ENCODE measurements at regions of chr13 and their contacts with region 1.

Region 1: DNA sequence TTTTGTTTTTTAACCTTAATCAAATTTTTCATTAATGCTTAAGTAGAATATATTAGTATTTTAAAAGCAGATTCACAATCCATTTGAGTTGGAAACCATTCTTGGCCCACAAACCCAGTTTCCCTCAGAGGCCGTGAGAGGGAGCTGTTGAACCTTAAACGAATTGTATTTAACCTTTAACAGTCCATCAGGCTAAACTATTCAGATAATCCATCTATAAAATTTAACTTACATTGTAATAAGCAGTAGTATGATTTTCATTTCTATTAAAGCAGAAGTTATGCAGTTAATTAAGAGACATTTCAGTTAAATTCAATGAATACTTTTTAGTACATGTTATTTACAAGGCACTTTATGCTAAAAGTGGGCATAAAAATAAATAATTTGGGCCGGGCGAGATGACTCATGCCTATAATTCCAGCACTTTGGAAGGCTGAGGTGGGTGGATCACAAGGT is 123.1 kb upstream of the C1QTNF9B start:
- DNase-seq: no peak
- H3K4me3 ChIP-seq: no peak overlapping the region
- H3K27me3 ChIP-seq: no peaks in the 10 kb centered on the region
- CTCF ChIP-seq: peak; percentile 81

Region 2: DNA sequence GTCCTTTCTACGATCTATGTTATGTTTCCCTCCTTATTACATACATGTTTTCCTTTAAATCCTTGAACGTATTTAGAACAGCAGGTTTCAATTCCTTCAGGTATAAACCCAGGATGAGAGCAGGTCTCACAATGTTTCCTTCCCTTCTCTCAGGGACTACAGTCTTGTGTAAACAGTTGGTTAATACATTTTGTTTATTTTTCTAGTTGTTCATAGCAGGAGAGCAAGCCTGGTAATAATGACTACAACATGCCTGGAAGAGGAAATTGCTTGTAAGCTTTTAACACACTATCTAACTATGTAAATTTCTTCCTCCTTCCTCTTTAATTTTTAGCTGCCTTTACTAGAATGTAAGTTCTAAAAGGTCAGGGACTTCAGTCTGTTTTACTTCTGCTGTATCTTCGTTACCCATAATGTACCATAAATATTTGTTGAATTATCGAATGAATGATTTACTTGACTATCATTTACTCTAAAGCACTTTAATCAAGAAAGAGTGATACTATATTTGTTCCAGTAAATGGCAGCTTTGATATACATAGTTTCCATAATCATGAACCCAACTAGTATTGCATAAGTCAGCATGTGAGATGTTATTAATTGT is 479.1 kb before region 1 on chr13:
- CTCF ChIA-PET with region 1: no interaction called
- POLR2A ChIA-PET with region 1: no interaction called
- DNase-seq: no peak
- H3K4me3 ChIP-seq: no peak overlapping the region
- H3K27me3 ChIP-seq: no peaks in the 10 kb centered on the region
- CTCF ChIP-seq: no peak

Region 3: GRCh38 chr13:23921451-23921888 is 98.9 kb before region 1 on chr13:
- CTCF ChIA-PET with region 1: interaction called, 15 read pairs
- POLR2A ChIA-PET with region 1: no interaction called
- DNase-seq: no peak
- H3K4me3 ChIP-seq: no peak overlapping the region
- H3K27me3 ChIP-seq: no peaks in the 10 kb centered on the region
- CTCF ChIP-seq: peak; percentile 64

Region 4: DNA sequence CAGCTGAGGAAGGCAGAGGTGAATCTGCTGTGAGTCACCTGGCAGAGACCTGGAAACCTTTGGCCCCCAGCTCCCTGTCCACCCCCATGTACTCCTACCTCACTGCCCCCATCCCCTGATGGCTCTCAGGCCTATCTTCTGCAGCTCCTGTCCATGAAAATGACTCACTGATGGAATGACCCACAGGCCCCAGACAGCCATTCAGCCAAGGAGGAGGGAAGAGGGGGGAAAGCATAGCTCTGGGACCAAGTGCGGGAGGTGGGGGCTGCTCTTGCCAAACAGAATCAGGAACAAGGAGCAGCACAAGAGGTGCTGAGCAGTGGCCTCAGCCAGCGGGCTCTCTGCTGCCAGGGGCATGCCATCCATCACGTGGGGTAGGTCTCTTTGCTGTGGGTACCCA is 11.7 kb before region 1 on chr13:
- CTCF ChIA-PET with region 1: interaction called, 21 read pairs
- POLR2A ChIA-PET with region 1: no interaction called
- DNase-seq: no peak
- H3K4me3 ChIP-seq: no peak overlapping the region
- H3K27me3 ChIP-seq: no peaks in the 10 kb centered on the region; the same call in 1 of the 2 replicates
- CTCF ChIP-seq: no peak

Region 5: DNA sequence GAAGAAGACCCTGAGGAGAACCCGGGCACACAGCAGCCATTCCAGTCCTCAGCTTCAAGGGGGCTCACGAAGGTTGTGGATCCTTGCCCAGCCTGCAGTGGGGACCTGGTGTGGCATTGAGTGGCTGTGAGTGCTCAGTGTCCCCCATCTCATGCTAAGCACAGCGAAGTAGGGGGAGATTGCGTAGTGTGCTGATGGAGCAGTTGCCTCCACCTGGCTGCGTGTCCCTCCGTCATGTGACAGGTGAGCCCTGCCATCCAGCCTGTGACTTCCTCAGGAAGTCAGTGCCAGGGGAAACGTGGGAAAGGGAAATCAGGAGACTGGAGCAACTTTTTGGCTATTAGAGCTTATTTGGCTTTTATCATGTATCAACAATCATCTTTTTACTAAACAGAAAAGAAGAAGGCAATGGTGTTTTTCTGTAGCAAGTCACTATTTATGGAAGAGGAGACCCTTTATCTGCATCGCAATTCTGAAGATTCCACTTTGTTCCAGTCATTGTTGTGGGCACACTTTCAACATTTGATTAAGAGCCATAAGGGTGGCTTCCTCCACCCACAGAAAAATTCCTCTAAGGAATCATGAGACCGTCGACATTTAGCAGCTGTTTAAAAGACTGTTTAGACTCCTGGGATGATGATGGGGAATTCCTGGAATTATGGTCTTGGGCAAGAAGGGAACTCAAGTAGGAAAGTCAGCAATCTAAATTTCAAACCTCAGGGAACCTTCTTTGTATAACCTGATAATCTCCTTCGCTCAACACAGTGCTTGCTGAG is 13.3 kb after region 1 on chr13:
- CTCF ChIA-PET with region 1: interaction called, 40 read pairs
- POLR2A ChIA-PET with region 1: no interaction called
- DNase-seq: peak; percentile 59
- H3K4me3 ChIP-seq: no peak overlapping the region
- H3K27me3 ChIP-seq: no peaks in the 10 kb centered on the region
- CTCF ChIP-seq: no peak

Region 6: GRCh38 chr13:24053519-24054251 is 33.3 kb after region 1 on chr13:
- CTCF ChIA-PET with region 1: interaction called, 15 read pairs
- POLR2A ChIA-PET with region 1: no interaction called
- DNase-seq: no peak
- H3K4me3 ChIP-seq: no peak overlapping the region
- H3K27me3 ChIP-seq: no peaks in the 10 kb centered on the region
- CTCF ChIP-seq: peak; percentile 79

Region 7: DNA sequence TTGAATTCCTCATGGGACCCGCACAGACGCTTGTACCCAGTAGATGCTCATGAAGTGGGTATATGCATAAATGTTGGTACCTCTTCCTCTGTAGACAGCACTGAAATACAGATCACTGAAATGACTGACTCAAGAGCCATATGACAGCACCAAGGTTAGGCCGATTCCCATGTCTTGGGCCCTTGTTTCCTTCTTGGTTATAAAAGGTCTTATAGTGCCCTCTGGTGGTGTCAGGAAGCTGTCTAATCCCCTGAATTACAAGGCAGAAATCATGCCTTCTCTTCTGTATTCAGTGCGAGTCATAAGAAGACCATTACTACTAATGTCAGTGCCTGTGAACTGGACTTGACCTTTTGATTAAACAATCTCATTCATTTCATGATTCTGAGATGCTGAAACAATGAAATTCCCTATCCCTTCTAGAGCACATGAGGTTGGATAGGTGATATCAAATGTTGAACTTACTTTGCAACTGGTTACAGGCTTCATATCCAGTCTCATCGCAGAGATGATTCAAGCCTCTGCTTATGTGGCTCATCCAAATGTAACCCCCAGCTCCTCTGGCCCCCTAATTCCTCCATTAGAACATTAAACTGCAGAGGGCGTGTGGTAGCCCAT is 199.8 kb after region 1 on chr13:
- CTCF ChIA-PET with region 1: interaction called, 75 read pairs
- POLR2A ChIA-PET with region 1: no interaction called
- DNase-seq: no peak
- H3K4me3 ChIP-seq: no peak overlapping the region
- H3K27me3 ChIP-seq: no peaks in the 10 kb centered on the region
- CTCF ChIP-seq: peak; percentile 67

Region 8: GRCh38 chr13:24228852-24229458 is 208.6 kb after region 1 on chr13:
- CTCF ChIA-PET with region 1: interaction called, 34 read pairs
- POLR2A ChIA-PET with region 1: interaction called, 5 read pairs
- DNase-seq: no peak
- H3K4me3 ChIP-seq: no peak overlapping the region
- H3K27me3 ChIP-seq: no peaks in the 10 kb centered on the region
- CTCF ChIP-seq: peak; percentile 93